Right ventricle myocardium inferior (tissue), 1 donor: ENCODE measurements at regions of chr12 and their contacts with region 1.

Region 1: GRCh38 chr12:132766380-132767085 is 4.9 kb upstream of the ANKLE2 start:
- DNase-seq: peak; percentile 81
- ATAC-seq: peak; percentile 23

Region 2: GRCh38 chr12:132393991-132394949 is 372.3 kb before region 1 on chr12:
- intact Hi-C with region 1: no loop called
- DNase-seq: peak; percentile 43
- ATAC-seq: no peak

Region 3: GRCh38 chr12:132460571-132460970 is 306.0 kb before region 1 on chr12:
- intact Hi-C with region 1: no loop called
- DNase-seq: peak; percentile 25
- ATAC-seq: no peak

Region 4: GRCh38 chr12:132523576-132524331 is 242.8 kb before region 1 on chr12:
- intact Hi-C with region 1: no loop called
- DNase-seq: peak; percentile 85
- ATAC-seq: peak; percentile 33

Region 5: DNA sequence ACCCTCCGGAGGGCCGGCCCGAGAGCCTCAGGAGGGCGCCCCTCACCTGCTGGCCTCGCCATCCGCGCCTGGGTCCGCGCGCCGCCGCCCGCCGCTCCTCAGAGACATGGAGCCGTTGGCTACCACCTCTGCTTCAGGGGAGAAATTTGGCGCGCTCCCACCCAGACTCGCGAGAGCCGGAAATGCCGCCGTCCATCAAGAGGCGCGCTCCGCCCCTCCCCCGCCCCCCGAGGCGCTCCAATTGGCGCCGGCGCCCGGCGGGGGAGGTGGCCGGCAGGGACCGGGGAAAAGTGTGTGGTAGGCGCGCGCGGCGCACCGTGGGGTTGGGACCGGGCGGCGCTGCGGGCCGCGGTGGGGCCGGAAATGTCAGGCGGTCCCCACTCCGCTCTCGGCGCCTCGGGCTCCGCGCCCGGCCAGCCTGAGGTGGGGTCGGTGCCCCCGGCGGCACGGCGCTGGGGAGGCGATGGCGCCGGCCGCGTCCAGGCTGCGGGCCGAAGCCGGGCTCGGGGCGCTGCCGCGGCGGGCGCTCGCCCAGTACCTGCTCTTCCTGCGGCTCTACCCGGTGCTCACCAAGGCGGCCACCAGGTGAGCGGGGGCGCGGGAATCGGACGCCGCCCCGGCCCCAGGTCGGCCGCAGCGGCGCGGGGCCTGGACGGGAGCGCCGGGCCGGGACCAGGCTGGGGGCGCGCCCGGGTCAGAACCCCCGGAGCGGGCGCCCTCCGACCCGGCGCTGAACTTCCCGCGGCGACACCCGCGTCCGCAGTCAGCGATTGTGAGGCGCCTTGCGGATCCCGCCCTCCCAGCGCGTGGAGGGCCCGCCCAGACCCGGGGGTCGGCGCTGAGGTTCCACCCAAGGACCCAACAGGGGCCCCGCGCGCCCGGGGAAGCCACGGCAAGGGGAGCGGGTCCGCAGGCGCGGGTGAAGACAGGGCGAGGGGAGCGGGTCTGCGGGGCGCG is 79.0 kb before region 1 on chr12 and contains the starts of genes POLE and PXMP2:
- intact Hi-C with region 1: loop called (anchors 5 kb)
- DNase-seq: peak; percentile 98
- ATAC-seq: peak; percentile 99
- total RNA-seq, gene POLE: 12.1 TPM
- total RNA-seq, gene PXMP2: 62.5 TPM

Region 6: GRCh38 chr12:132887513-132888351 is 121.2 kb after region 1 on chr12 and contains the start of gene CHFR:
- intact Hi-C with region 1: loop called (anchors 5 kb)
- DNase-seq: peak; percentile 99
- ATAC-seq: peak; percentile 100
- total RNA-seq, gene CHFR: 14.1 TPM